H1 (cell line): ENCODE measurements at regions of chr16 and their contacts with region 1.

Region 1: DNA sequence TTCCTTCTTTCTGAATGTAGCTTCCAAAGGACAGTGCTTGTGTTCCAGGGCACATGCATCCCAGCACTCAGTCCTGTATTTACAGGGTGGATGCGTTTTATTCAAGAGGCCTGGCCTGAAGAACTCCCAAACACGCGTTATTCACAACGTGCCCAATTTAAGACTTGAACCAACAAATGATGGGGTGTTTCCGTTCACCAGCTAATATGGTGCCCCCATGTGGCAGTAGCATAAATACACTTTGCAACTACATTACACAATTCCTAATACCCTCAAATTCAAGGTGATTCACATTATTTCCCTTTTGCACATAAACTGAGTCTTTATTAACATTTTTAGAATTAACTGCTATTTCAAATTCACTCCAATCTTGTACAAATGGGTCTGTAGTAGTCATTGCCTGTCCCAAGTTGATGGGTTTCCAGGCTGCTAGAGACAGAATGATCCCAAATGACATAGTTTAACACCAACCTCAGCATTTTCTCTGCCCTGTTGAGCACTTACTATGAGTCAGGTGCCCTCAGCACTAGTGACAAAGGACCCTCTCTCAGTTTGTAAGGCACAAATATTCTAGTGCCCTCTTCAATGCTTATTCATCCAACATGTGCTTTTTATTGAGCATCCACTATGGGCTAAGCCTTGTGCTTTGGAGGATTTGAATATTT is 26.9 kb downstream of the HSD17B2 start:
- DNase-seq: no peak
- H3K4me3 ChIP-seq: no peak overlapping the region
- H3K27ac ChIP-seq: no peak overlapping the region
- H3K4me1 ChIP-seq: no peaks in the 10 kb centered on the region
- H3K27me3 ChIP-seq: peaks cover 0 to 1% (median 0%) of the 10 kb centered on the region in 4 experiments; a peak in 1 of 7 replicates
- CTCF ChIP-seq: peak in 2 of 3 experiments; percentile 30 to 75; a peak in 2 of 4 replicates
- EP300 ChIP-seq: no peak
- POLR2A ChIP-seq: no peak
- RAD21 ChIP-seq: peak; percentile 56 to 61

Region 2: DNA sequence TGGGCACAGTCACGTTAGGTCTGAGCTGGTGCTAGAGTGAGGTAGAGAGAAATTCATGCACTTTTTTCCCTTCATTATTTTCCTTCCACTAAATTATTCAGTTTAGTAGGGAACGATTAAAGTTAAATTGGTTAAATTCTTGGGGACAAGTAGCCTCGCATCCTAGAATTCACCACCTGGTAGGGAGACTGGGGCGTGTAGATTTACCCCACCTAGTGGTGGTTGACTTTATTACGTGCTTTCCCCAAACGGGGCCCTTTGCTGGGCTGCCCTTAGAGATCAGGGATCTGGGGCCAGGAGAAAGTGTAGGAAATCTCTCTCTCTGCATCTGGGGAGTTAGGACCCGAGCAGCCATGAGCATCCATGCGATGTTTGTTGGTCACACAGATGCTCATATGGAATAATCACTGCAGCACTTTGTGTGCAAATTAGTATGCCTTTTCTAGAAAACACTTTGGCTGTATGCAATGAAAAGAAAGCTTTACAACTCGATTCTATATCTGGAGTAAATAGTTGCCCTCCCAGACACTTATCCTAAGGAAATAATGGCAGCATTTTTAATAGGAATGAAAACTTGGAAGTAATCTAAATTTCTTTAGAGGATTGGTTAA is 175.9 kb before region 1 on chr16:
- CTCF ChIA-PET with region 1: interaction called, 11 read pairs
- POLR2A ChIA-PET with region 1: no interaction called
- DNase-seq: peak; percentile 36 to 77
- H3K4me3 ChIP-seq: no peak overlapping the region
- H3K27ac ChIP-seq: no peak overlapping the region
- H3K4me1 ChIP-seq: peaks cover 0 to 3% (median 1%) of the 10 kb centered on the region in 4 experiments; a peak in 1 of 7 replicates
- H3K27me3 ChIP-seq: no peaks in the 10 kb centered on the region
- CTCF ChIP-seq: peak; percentile 58 to 77 (median 75)
- EP300 ChIP-seq: no peak
- POLR2A ChIP-seq: no peak
- RAD21 ChIP-seq: peak; percentile 60 to 71

Region 3: DNA sequence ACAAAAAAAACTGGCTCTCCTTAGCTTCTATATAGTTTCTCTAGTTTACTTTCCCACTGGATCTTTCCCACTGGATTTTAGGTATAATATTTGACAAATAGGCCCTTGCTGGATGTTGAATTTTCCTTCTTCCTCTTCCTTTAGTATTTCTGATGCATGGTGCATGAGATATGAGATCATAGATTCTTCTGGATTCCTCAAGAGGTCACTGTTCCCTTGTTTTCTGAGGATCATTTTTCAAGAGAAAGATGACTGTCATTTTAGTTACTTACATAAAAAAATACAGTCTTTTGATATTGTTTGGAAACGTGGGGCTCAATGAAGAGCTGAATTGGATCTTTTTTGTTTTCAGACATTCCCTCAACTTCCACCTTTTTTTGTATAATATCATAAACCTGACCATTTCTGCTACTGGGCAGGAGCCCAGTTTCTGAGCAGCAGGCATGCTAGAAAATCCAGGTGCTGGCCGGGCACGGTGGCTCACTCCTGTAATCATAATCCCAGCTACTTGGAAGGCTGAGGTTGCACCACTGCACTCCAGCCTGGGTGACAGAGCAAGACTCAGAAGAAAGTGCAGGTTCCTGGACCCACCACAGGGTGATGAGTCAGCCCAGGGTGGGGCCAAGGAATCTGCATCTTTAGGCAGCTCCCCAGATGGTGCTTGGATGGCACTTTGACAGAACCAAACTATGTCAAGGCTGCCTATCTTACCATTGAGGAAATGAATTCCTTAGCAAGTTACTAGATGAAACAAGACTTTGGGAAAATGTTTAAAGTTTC is 121.0 kb before region 1 on chr16:
- CTCF ChIA-PET with region 1: interaction called, 38 read pairs
- POLR2A ChIA-PET with region 1: no interaction called
- DNase-seq: peak in 1 of 2 experiments; percentile 45
- H3K4me3 ChIP-seq: no peak overlapping the region
- H3K27ac ChIP-seq: no peak overlapping the region
- H3K4me1 ChIP-seq: peaks cover 7 to 31% (median 29%) of the 10 kb centered on the region in 4 experiments
- H3K27me3 ChIP-seq: 0 out of 7 replicates have a peak, but pooled peaks cover 0 to 2% (median 0%) of the 10 kb centered on the region in 4 experiments
- CTCF ChIP-seq: peak in 2 of 3 experiments; percentile 20 to 43; a peak in 2 of 4 replicates
- EP300 ChIP-seq: no peak
- POLR2A ChIP-seq: no peak
- RAD21 ChIP-seq: peak; percentile 62 to 64

Region 4: GRCh38 chr16:82031116-82032084 is 30.6 kb before region 1 on chr16:
- CTCF ChIA-PET with region 1: interaction called, 15 read pairs
- POLR2A ChIA-PET with region 1: no interaction called
- DNase-seq: no peak
- H3K4me3 ChIP-seq: no peak overlapping the region
- H3K27ac ChIP-seq: no peak overlapping the region
- H3K4me1 ChIP-seq: no peaks in the 10 kb centered on the region; a peak in 1 of 7 replicates
- H3K27me3 ChIP-seq: no peaks in the 10 kb centered on the region
- CTCF ChIP-seq: peak in 2 of 3 experiments; percentile 69 to 71; a peak in 3 of 4 replicates
- EP300 ChIP-seq: no peak
- POLR2A ChIP-seq: no peak
- RAD21 ChIP-seq: peak; percentile 86 to 92

Region 5: GRCh38 chr16:82043680-82044584 is 18.1 kb before region 1 on chr16:
- CTCF ChIA-PET with region 1: interaction called, 19 read pairs
- POLR2A ChIA-PET with region 1: no interaction called
- DNase-seq: no peak
- H3K4me3 ChIP-seq: no peak overlapping the region
- H3K27ac ChIP-seq: no peak overlapping the region
- H3K4me1 ChIP-seq: no peaks in the 10 kb centered on the region
- H3K27me3 ChIP-seq: no peaks in the 10 kb centered on the region
- CTCF ChIP-seq: no peak
- EP300 ChIP-seq: no peak
- POLR2A ChIP-seq: no peak
- RAD21 ChIP-seq: no peak

Region 6: DNA sequence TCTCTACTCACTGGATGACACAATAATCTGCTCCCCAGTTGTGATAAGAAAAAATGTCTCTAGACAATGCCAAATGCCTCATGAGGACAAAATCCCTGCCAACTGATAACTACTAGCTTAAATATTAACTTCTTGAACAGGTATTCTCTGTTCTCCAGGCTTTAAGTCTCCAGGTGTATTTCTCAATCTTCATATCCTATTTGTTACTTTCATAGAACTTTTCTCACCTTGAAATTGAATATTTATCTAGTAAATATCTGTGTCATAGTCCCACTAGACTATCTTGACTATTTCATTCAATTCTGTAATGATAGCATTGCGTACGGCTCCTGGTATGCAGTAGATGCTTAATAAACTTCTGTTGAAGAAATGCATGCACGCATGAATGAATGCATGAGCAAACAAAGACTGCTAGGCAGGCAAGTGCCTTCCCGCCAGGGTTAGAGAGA is 11.1 kb before region 1 on chr16:
- CTCF ChIA-PET with region 1: interaction called, 28 read pairs
- POLR2A ChIA-PET with region 1: interaction called, 3 read pairs
- DNase-seq: no peak
- H3K4me3 ChIP-seq: no peak overlapping the region
- H3K27ac ChIP-seq: no peak overlapping the region
- H3K4me1 ChIP-seq: no peaks in the 10 kb centered on the region
- H3K27me3 ChIP-seq: no peaks in the 10 kb centered on the region
- CTCF ChIP-seq: no peak
- EP300 ChIP-seq: no peak
- POLR2A ChIP-seq: no peak
- RAD21 ChIP-seq: no peak

Region 7: DNA sequence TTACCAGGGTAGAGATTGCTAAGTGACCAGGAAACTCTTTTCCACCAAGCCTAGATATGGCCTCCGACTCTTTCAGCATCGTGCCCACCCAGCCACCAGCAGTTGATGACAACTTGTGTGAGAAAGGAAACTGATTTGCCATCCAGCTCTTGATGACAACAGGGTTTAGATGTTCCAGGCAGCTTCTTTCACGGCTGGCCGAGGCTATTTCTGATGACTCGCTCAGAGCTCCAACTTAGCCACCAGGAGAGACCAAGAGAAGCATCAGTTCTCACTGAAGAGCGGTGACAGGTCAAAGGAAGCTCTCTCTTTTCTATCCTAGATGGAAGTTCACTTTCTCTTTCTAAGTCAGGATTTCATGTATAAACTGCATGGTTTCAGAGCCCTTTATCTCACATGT is 46.8 kb after region 1 on chr16:
- CTCF ChIA-PET with region 1: no interaction called
- POLR2A ChIA-PET with region 1: no interaction called
- DNase-seq: no peak
- H3K4me3 ChIP-seq: no peak overlapping the region
- H3K27ac ChIP-seq: no peak overlapping the region
- H3K4me1 ChIP-seq: no peaks in the 10 kb centered on the region
- H3K27me3 ChIP-seq: no peaks in the 10 kb centered on the region
- CTCF ChIP-seq: no peak
- EP300 ChIP-seq: no peak
- POLR2A ChIP-seq: no peak
- RAD21 ChIP-seq: no peak

Region 8: DNA sequence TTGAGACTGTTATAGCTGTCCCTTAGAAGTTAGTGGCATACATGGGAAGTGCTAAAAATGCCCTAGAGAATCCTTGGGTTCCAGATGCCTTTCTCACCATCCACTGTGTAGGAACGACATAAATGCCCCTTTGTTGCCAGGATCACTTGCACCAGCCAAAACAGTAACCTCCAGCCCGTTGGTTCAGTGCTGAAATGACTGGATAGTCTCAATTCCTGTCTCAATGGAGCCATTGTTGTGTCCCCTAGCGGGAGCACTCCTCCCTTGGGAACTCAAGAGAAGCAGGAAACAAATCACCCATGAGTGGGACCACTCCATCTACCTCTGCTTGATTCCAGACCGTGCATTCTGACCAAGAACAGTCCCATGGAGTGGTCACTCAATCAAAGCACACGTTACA is 85.0 kb after region 1 on chr16:
- CTCF ChIA-PET with region 1: no interaction called
- POLR2A ChIA-PET with region 1: no interaction called
- DNase-seq: no peak
- H3K4me3 ChIP-seq: no peak overlapping the region
- H3K27ac ChIP-seq: no peak overlapping the region
- H3K4me1 ChIP-seq: no peaks in the 10 kb centered on the region
- H3K27me3 ChIP-seq: no peaks in the 10 kb centered on the region; a peak in 1 of 7 replicates
- CTCF ChIP-seq: no peak
- EP300 ChIP-seq: no peak
- POLR2A ChIP-seq: no peak
- RAD21 ChIP-seq: no peak